OCI-LY7 (cell line): ENCODE measurements at regions of chr3 and their contacts with region 1.

Region 1: DNA sequence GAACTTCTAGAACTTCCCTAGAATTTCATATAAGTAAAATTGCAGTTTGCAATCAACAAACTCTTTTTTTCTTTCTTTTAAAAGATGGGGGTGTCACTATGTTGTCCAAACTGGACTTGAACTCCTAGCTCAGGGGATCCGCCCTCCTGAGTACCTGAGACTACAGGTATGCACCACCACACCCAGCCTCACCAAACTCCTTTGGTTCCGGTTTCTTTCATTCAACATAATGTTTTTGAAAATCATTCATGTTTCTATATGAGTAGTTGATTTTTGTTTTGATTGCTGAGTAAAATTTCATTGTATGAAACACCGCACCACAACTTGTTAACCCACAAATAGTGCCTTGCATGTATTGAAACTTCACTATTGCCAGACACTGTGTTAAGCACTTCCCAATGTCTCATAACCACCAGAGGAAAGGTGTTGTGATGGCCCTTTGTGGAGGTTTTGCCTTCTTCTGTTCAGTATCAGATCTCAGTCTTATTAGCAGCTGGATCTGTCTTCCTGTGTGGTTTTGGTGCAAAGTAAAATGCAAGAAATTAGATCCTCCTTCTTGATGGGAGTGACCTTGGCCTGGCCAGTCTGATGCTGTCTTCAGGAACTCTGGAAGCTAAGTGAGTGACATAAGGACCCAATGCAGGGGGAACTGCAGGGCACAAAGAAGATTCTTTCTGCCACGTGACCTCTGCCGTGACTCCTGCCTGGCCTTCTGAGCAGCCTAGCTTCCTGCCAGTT is 78.8 kb upstream of the UBE2E1 start:
- DNase-seq: no peak
- H3K4me3 ChIP-seq: no peak overlapping the region
- H3K27ac ChIP-seq: no peak overlapping the region
- H3K4me1 ChIP-seq: peaks cover 8% of the 10 kb centered on the region
- CTCF ChIP-seq: no peak

Region 2: DNA sequence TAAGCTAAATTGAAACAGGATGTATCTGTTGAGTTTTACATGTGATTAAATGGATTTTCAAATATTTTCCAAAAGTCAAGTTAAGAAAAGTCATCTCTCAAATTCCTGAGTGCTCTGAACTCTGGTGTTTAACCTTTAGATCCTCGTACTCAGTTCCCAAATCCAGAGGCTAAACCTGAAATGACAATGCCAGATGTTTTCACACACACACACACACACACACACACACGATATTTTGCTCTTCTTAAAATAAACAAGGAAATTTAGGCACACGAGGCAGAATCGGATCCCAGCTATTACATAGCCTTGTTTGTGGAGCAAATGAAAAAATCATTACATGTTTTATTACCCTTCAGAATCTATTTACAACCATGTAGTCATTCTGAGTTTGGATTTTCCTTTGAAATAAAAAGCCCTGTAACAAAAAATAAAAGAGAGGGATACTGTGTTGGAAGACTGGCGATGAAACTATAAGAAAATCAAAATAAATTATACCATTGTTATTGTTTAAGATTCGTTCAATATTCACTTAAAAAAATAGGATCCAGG is 58.2 kb after region 1 on chr3:
- CTCF ChIA-PET with region 1: no interaction called
- POLR2A ChIA-PET with region 1: interaction called, 3 read pairs
- intact Hi-C with region 1: loop called (anchors 10 kb)
- DNase-seq: no peak
- H3K4me3 ChIP-seq: no peak overlapping the region
- H3K27ac ChIP-seq: no peak overlapping the region
- H3K4me1 ChIP-seq: no peaks in the 10 kb centered on the region
- CTCF ChIP-seq: no peak